Transverse colon (tissue), 4 donors: ENCODE measurements at regions of chr13 and their contacts with region 1.

Region 1: DNA sequence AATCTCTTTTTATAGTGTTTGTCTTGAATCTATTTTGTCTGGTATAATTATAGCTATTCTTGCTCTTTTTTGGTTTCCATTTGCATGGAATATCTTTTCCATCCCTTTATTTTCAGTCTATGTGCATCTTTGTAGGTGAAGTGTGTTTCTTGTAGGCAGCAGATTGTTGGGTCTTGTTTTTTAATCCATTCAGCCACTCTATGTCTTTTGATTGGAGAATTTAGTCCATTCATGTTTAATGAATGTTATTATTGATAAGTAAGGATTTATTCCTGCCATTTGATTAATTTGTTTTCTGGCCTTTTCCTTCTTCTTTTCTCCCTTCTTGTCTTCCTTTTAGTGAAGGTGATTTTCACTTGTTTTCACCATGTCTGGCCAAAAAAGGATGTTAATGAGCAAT is 11.7 kb upstream of the ZDHHC20 start:
- DNase-seq: no peak
- H3K4me3 ChIP-seq: no peak overlapping the region
- H3K27ac ChIP-seq: no peak overlapping the region
- H3K4me1 ChIP-seq: peaks cover 0 to 5% (median 0%) of the 10 kb centered on the region in 4 donors
- H3K27me3 ChIP-seq: no peaks in the 10 kb centered on the region
- CTCF ChIP-seq: no peak
- EP300 ChIP-seq: no peak
- POLR2A ChIP-seq: no peak

Region 2: GRCh38 chr13:19726611-19727010 is 1744.2 kb before region 1 on chr13:
- in situ Hi-C with region 1: no loop called
- intact Hi-C with region 1: loop called (anchors 5 kb)
- DNase-seq: no peak
- H3K4me3 ChIP-seq: no peak overlapping the region
- H3K27ac ChIP-seq: no peak overlapping the region
- H3K4me1 ChIP-seq: no peaks in the 10 kb centered on the region
- H3K27me3 ChIP-seq: no peaks in the 10 kb centered on the region
- CTCF ChIP-seq: no peak
- EP300 ChIP-seq: no peak
- POLR2A ChIP-seq: no peak

Region 3: DNA sequence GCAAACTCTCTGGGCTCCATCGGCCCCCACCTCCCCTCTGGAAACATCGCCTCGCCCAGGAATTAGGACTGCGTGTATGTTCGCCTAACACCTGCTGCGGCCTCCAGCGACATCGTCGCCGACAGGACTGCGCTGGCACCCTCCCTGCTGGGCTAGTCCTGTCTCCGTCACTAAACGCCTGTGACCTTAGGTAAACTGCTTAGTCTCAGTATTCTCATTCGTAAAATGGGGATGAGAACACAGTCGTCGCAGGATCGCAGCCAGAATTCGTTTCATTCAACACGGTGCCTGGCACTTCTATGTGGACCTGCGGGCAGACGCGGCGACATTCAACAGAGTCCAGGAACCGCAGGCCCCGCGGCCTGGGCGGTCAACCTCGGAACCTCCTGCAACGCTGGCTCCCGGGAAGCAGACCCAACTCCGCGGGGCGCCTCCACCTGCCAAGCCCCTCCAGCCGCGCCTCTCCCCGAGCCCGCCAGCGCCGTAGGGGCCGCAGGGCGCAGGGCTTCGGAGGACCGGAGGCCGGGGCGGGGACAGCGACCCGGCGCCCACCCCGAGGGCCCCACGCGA is 945.6 kb before region 1 on chr13:
- in situ Hi-C with region 1: no loop called
- intact Hi-C with region 1: no loop called
- DNase-seq: peak; percentile 57
- H3K4me3 ChIP-seq: peak overlapping the region; percentile 85 to 92 (median 88)
- H3K27ac ChIP-seq: peak overlapping the region; percentile 84 to 92 (median 92)
- H3K4me1 ChIP-seq: peaks cover 7 to 29% (median 19%) of the 10 kb centered on the region in 4 donors
- H3K27me3 ChIP-seq: no peaks in the 10 kb centered on the region
- CTCF ChIP-seq: no peak
- EP300 ChIP-seq: no peak
- POLR2A ChIP-seq: no peak

Region 4: GRCh38 chr13:21528621-21529020 is 57.8 kb after region 1 on chr13:
- in situ Hi-C with region 1: no loop called
- intact Hi-C with region 1: no loop called
- DNase-seq: no peak
- H3K4me3 ChIP-seq: no peak overlapping the region
- H3K27ac ChIP-seq: no peak overlapping the region
- H3K4me1 ChIP-seq: no peaks in the 10 kb centered on the region
- H3K27me3 ChIP-seq: no peaks in the 10 kb centered on the region
- CTCF ChIP-seq: no peak
- EP300 ChIP-seq: no peak
- POLR2A ChIP-seq: no peak